Common myeloid progenitor, CD34-positive (primary cell): ENCODE measurements at regions of chr5 and their contacts with region 1.

Region 1: DNA sequence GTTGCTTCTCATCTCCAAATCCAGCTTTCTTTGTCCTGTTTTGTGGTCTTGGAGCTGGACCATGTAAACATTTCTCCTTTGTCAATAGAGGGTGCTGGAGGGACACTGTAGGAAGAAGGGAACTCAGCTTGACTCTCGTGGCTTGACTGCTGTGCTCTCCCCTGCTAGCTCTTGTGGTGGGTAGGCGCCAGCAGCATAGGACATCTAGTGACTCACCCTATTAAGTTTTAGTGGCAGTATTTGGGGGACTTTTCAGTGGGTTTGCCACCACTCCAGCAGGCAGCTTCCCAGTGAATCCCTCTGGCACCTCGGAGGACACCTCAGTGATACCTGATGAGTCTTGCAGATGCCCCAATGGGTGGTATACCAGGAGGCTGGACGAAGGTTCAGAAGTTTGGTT is 97.8 kb downstream of the TSSK1B start:
- DNase-seq: peak; percentile 72 to 83 (median 77)
- H3K4me3 ChIP-seq: no peak overlapping the region
- H3K27ac ChIP-seq: no peak overlapping the region
- H3K4me1 ChIP-seq: no peaks in the 10 kb centered on the region
- H3K27me3 ChIP-seq: peaks cover 8 to 63% (median 23%) of the 10 kb centered on the region in 5 experiments

Region 2: GRCh38 chr5:113513384-113514288 is 176.7 kb after region 1 on chr5 and contains the start of gene YTHDC2:
- CTCF ChIA-PET with region 1: interaction called, 46 read pairs
- POLR2A ChIA-PET with region 1: no interaction called
- DNase-seq: peak; percentile 89 to 94 (median 90)
- H3K4me3 ChIP-seq: peak within 1 kb of the TSS; percentile 79 to 93 (median 85)
- H3K27ac ChIP-seq: peak within 1 kb of the TSS; percentile 64 to 83
- H3K4me1 ChIP-seq: peaks cover 3 to 8% (median 6%) of the 10 kb centered on the region in 4 experiments
- H3K27me3 ChIP-seq: peaks cover 0 to 34% (median 8%) of the 10 kb centered on the region in 5 experiments

Region 3: GRCh38 chr5:113606298-113607134 is 269.5 kb after region 1 on chr5:
- CTCF ChIA-PET with region 1: interaction called, 37 read pairs
- POLR2A ChIA-PET with region 1: no interaction called
- DNase-seq: peak; percentile 51 to 74 (median 74)
- H3K4me3 ChIP-seq: peak overlapping the region in 1 of 7 experiments; percentile 5
- H3K27ac ChIP-seq: no peak overlapping the region
- H3K4me1 ChIP-seq: peaks cover 0 to 7% (median 2%) of the 10 kb centered on the region in 4 experiments
- H3K27me3 ChIP-seq: peaks cover 0 to 59% (median 25%) of the 10 kb centered on the region in 5 experiments